Heart right ventricle (tissue), 16 donors: ENCODE measurements at regions of chr5 and their contacts with region 1.

Region 1: DNA sequence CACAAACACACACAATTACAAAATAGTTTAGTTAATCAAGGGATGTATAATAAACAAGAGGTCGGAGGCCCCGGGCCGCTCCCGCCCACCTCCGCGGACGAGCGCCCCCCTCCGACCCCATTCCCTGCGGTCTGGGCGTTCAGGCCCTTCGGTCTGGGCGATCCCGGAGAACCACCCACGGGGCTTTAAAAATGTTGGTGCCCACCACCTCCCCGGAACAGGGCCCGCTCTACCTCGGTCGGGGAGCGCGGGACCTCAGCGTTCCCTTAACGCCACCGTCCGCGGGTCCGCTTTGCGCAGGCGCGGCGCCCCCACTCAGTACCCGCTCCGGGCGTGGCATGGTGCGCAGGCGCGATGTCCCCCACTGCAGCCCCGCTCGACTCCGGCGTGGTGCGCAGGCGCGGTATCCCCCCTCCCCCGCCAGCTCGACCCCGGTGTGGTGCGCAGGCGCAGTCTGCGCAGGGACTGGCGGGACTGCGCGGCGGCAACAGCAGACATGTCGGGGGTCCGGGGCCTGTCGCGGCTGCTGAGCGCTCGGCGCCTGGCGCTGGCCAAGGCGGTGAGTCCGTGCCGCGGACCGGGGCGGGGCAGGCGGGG is at the starts of genes CCDC127 and SDHA:
- DNase-seq: peak; percentile 96 to 99
- ATAC-seq: peak; percentile 96 to 98 (median 97)
- H3K4me3 ChIP-seq: peak within 1 kb of the TSS; percentile 69 to 100 (median 96)
- H3K27ac ChIP-seq: peak within 1 kb of the TSS; percentile 90 to 99 (median 96)
- H3K4me1 ChIP-seq: peaks cover 3 to 54% (median 38%) of the 10 kb centered on the region in 9 donors
- H3K27me3 ChIP-seq: no peaks in the 10 kb centered on the region
- CTCF ChIP-seq: peak in 7 of 9 donors; percentile 17 to 67 (median 43)
- total RNA-seq, gene CCDC127: 5.0 to 10.4 (median 7.7) TPM
- total RNA-seq, gene SDHA: 557 to 897 (median 823) TPM

Region 2: GRCh38 chr5:11898-12297 is 206.1 kb before region 1 on chr5:
- intact Hi-C with region 1: no loop called
- DNase-seq: no peak
- ATAC-seq: no peak
- H3K4me3 ChIP-seq: no peak overlapping the region
- H3K27ac ChIP-seq: no peak overlapping the region
- H3K4me1 ChIP-seq: no peaks in the 10 kb centered on the region
- H3K27me3 ChIP-seq: no peaks in the 10 kb centered on the region
- CTCF ChIP-seq: no peak

Region 3: DNA sequence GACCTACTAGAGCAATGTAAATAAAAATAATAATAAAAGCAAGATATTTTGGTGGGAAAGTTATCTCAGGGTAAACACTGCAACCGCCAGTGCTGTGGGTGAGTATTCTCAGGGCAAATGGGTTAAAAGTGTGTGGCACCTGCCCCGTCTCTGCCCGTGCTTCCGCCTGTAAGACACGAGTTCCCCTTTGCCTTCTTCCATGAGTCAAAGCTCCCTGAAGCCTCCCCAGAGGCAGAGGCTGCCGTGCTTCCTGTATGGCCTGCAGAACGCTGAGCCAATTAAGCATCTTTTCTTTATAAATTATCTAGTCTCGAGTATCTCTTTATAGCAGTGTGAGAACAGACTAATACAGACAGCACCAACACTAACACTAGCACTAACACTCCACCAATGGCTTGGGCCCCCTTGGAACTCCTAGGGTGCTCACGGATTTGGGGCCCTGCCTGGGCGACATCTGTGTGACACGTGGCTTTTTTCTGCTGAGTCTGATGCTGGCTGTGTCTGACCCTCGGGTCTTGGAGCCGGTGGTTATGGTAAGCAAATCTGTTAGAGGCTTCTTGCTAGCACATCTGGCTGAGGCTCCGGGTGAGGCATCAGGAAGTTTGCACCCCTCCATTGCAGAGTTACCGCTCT is 115.4 kb before region 1 on chr5:
- intact Hi-C with region 1: no loop called
- DNase-seq: no peak
- ATAC-seq: no peak
- H3K4me3 ChIP-seq: no peak overlapping the region
- H3K27ac ChIP-seq: no peak overlapping the region
- H3K4me1 ChIP-seq: no peaks in the 10 kb centered on the region
- H3K27me3 ChIP-seq: peaks cover 0 to 73% (median 60%) of the 10 kb centered on the region in 7 donors
- CTCF ChIP-seq: no peak

Region 4: DNA sequence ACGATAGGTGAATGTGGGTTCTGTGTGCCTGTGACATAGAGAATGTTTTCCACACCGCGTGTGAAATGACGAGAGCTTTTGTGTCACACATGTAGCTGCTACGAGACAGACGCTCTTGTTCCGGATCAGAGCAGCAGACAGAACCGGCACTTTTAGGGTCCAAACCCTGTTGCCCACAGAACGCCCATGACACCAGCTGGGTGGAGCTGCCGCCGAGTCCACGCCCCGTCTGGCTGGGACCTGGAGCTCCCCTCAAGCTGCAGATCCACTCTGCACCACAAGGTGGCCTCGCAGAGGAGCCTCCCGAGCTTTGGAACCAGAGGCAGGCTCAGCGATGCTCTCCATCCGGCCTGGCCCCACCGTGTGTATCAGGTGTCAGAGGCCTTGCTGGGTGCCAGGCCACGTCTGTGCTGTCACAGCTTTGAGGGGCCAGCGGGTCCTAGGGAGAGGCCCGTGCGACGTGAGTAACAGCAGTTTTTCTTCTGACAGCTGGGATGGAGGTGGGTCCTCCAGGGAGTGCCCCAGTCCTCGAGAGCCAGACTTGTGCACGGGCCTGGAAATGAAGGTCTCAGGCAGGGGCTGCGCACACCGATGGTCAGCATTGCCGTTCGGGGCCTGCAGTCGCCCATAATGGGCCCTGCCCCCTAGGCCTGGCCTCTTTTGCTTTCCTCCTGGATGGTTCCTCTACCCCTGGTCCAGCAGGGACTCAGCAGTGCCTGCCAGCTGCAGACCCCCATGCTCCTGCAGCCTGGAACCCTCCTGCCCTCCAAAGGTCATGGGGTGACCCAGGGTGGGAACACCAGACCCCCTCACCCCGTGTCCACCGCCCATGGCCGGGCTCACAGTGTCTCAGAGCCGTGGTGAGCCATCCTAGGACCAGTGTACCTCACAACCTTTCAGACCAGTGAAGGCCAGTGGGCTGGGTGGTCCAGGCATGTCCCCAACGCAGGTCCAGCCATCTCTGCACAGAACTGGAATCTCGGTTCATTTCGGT is 29.2 kb before region 1 on chr5:
- intact Hi-C with region 1: loop called in 2 of 10 experiments (anchors 2 kb)
- DNase-seq: peak; percentile 88
- ATAC-seq: peak; percentile 17 to 75 (median 66)
- H3K4me3 ChIP-seq: peak overlapping the region in 7 of 10 donors; percentile 8 to 38 (median 22)
- H3K27ac ChIP-seq: peak overlapping the region in 7 of 10 donors; percentile 76 to 97 (median 92)
- H3K4me1 ChIP-seq: peaks cover 6 to 45% (median 22%) of the 10 kb centered on the region in 9 donors
- H3K27me3 ChIP-seq: peaks cover 0 to 27% (median 7%) of the 10 kb centered on the region in 7 donors
- CTCF ChIP-seq: peak; percentile 87 to 97 (median 94)

Region 5: GRCh38 chr5:257148-257547 is 39.2 kb after region 1 on chr5:
- intact Hi-C with region 1: no loop called
- DNase-seq: no peak
- ATAC-seq: peak in 5 of 8 donors; percentile 22 to 69 (median 35)
- H3K4me3 ChIP-seq: no peak overlapping the region
- H3K27ac ChIP-seq: no peak overlapping the region
- H3K4me1 ChIP-seq: peaks cover 0 to 9% (median 0%) of the 10 kb centered on the region in 9 donors
- H3K27me3 ChIP-seq: no peaks in the 10 kb centered on the region
- CTCF ChIP-seq: no peak

Region 6: DNA sequence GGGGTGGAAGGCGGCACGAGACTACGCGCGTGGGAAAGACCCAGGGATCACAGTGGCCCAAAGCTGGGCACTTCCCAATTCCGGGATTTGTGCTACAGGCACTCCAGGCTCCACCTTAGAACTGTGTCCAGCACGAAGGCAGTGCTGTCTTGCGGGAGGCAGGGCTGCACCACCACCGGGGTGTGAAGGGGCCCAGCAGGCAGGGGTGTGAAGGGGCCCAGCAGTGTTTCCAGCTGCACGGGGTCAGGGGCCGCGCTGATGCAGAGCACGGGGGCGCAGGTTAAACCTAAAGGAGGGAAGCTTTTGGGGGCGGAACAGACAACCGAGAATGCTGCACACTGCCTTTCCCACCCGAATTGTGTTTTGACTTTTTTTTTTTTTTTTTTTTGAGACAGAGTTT is 52.4 kb after region 1 on chr5:
- intact Hi-C with region 1: loop called in 1 of 10 experiments (anchors 10 kb)
- DNase-seq: no peak
- ATAC-seq: no peak
- H3K4me3 ChIP-seq: peak overlapping the region in 6 of 10 donors; percentile 71 to 99 (median 97)
- H3K27ac ChIP-seq: peak overlapping the region in 6 of 10 donors; percentile 84 to 98 (median 93)
- H3K4me1 ChIP-seq: peaks cover 0 to 34% (median 16%) of the 10 kb centered on the region in 9 donors
- H3K27me3 ChIP-seq: no peaks in the 10 kb centered on the region
- CTCF ChIP-seq: no peak